ENCODE measurements at regions of chrX and their contacts with region 1.

Region 1: GRCh38 chrX:154748712-154749343 is 2.0 kb downstream of the GAB3 start:
- DNase-seq: peak; percentile 53
- H3K4me3 Mint-ChIP-seq: peak overlapping the region; percentile 39
- H3K27ac Mint-ChIP-seq: no peak overlapping the region
- H3K4me1 Mint-ChIP-seq: peaks cover 35% of the 10 kb centered on the region
- H3K27me3 Mint-ChIP-seq: no peaks in the 10 kb centered on the region

Region 2: GRCh38 chrX:154714925-154715324 is 33.9 kb before region 1 on chrX:
- CTCF ChIA-PET with region 1: interaction called, 41 read pairs
- POLR2A ChIA-PET with region 1: interaction called, 6 read pairs
- intact Hi-C with region 1: loop called (anchors 1 kb)
- DNase-seq: peak; percentile 42
- H3K4me3 Mint-ChIP-seq: no peak overlapping the region
- H3K27ac Mint-ChIP-seq: no peak overlapping the region
- H3K4me1 Mint-ChIP-seq: peaks cover 55% of the 10 kb centered on the region
- H3K27me3 Mint-ChIP-seq: no peaks in the 10 kb centered on the region

Region 3: DNA sequence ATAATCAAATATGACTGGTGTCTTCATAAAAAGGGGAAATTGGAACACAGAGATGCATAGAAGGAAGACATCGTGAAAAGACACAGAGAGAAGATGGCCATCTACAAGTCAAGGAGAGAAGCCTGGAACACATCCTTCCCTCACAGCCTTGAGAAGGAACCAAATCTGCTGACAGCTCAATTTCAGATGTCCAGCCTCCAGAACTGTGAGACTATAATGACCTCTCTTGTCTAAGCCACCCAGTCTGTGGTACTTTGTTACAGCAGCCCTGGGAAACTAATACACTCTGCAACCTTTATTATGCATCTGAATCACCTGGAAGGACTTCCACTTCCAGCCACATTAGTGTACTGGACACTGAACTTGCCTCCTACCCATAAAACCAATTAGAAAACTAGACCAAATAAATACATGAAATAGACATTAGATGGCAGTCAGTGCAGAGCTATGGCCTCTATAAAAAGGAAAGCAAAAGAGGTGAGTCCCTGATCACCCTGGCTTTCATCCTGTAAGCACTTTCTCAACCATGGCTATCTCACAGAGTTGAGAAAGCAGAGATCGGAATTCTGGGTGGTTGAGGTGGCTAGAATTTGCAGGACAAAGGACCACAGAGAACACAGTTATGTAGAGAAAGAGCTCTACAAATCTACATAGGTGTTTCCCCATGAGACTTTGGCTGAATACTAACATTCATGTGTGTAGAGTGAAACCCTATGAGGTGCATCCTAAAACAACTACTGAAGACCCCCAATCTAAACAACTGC is 23.7 kb before region 1 on chrX:
- CTCF ChIA-PET with region 1: interaction called, 41 read pairs
- POLR2A ChIA-PET with region 1: interaction called, 6 read pairs
- intact Hi-C with region 1: no loop called
- DNase-seq: peak; percentile 17
- H3K4me3 Mint-ChIP-seq: no peak overlapping the region
- H3K27ac Mint-ChIP-seq: peak overlapping the region; percentile 73
- H3K4me1 Mint-ChIP-seq: peaks cover 72% of the 10 kb centered on the region
- H3K27me3 Mint-ChIP-seq: no peaks in the 10 kb centered on the region

Region 4: DNA sequence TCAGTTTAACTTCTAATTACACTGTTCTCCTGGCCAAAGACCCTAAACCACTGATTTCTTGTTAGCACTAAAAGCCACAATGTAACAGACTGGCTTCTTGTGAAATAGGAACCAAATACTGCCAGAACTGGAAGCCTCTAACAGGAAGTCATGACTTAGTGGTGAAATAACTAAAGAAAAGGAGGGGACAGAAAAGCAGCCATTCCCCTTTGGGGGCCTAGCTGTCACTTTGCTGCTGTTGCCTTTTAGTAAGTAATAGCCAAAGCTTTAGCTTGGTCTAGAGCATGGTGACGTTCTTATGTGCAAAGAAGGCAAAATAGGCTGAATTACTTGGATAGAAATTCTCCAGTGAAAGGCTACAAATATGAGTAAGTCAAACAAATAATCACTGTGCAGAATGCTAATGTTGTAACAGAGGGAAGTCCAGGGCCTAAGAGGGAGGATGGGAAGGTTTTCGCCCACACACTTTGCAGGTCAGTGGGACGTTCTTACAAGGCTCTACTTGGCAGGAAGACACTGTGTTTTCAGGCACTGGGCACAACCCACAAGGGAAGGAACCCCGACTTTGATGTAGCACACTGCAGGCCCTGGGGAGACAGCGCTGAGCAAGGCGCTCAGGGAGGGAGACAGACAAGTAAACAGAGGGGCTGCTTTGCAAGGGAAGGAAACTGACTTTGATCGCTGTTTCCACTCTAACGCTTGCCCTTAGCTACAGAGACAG is 14.6 kb before region 1 on chrX:
- CTCF ChIA-PET with region 1: interaction called, 49 read pairs
- POLR2A ChIA-PET with region 1: interaction called, 3 read pairs
- intact Hi-C with region 1: no loop called
- DNase-seq: peak; percentile 28
- H3K4me3 Mint-ChIP-seq: peak overlapping the region; percentile 65
- H3K27ac Mint-ChIP-seq: peak overlapping the region; percentile 94
- H3K4me1 Mint-ChIP-seq: peaks cover 87% of the 10 kb centered on the region
- H3K27me3 Mint-ChIP-seq: no peaks in the 10 kb centered on the region

Region 5: GRCh38 chrX:154762523-154763289 is 13.9 kb after region 1 on chrX and contains the start of gene DKC1:
- CTCF ChIA-PET with region 1: interaction called, 5 read pairs
- POLR2A ChIA-PET with region 1: interaction called, 10 read pairs
- intact Hi-C with region 1: loop called (anchors 1 kb)
- DNase-seq: peak; percentile 96
- H3K4me3 Mint-ChIP-seq: peak within 1 kb of the TSS; percentile 85
- H3K27ac Mint-ChIP-seq: peak within 1 kb of the TSS; percentile 91
- H3K4me1 Mint-ChIP-seq: peaks cover 33% of the 10 kb centered on the region
- H3K27me3 Mint-ChIP-seq: no peaks in the 10 kb centered on the region
- total RNA-seq, gene DKC1: 94.0 to 95.5 TPM

Region 6: GRCh38 chrX:154840856-154841255 is 92.0 kb after region 1 on chrX:
- CTCF ChIA-PET with region 1: interaction called, 28 read pairs
- POLR2A ChIA-PET with region 1: no interaction called
- intact Hi-C with region 1: no loop called
- DNase-seq: peak; percentile 9
- H3K4me3 Mint-ChIP-seq: no peak overlapping the region
- H3K27ac Mint-ChIP-seq: no peak overlapping the region
- H3K4me1 Mint-ChIP-seq: no peaks in the 10 kb centered on the region
- H3K27me3 Mint-ChIP-seq: no peaks in the 10 kb centered on the region

Region 7: DNA sequence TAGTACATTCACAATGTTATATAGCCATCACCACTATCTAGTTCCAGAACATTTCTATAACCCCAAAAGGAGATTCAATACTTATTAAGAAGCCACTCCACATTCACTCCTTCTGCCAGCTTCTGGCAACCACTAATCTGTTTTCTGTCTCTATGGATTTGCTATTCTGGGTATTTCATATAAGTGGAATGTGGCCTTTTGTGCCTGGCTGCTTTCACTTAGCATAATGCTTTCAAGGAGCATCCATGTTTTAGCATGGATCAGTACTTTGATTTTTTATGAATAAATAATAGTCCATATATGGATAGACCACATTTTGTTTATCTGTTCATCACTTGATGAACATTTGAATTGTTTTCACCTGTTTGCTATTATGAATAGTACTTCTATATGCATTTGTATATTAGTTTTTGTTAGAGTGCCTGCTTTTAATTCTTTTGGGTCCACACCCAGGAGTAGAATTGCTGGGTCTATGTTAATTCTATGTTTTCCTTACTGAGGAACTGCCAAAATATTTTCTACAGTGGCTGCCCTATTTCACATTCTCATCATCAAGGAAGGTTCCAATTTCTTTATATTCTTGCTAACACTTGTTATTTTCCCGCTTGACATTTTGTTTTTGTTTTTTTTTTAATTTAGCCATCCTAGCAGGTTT is 102.3 kb after region 1 on chrX:
- CTCF ChIA-PET with region 1: no interaction called
- POLR2A ChIA-PET with region 1: no interaction called
- intact Hi-C with region 1: no loop called
- DNase-seq: no peak
- H3K4me3 Mint-ChIP-seq: no peak overlapping the region
- H3K27ac Mint-ChIP-seq: no peak overlapping the region
- H3K4me1 Mint-ChIP-seq: no peaks in the 10 kb centered on the region
- H3K27me3 Mint-ChIP-seq: no peaks in the 10 kb centered on the region

Measured in activated CD4-positive, alpha-beta memory T cell treated with anti-CD3 and anti-CD28 coated beads for 36 hours (primary cell).